B cell (primary cell): ENCODE measurements at regions of chr10 and their contacts with region 1.

Region 1: GRCh38 chr10:12027539-12027938 is 15.1 kb downstream of the UPF2 start:
- DNase-seq: no peak
- ATAC-seq: no peak
- H3K4me3 ChIP-seq: no peak overlapping the region
- H3K4me3 Mint-ChIP-seq: no peak overlapping the region
- H3K27ac ChIP-seq: no peak overlapping the region
- H3K27ac Mint-ChIP-seq: no peak overlapping the region
- H3K4me1 ChIP-seq: peaks cover 4 to 6% of the 10 kb centered on the region in 2 donors
- H3K4me1 Mint-ChIP-seq: peaks cover 14% of the 10 kb centered on the region
- H3K27me3 ChIP-seq: no peaks in the 10 kb centered on the region
- H3K27me3 Mint-ChIP-seq: no peaks in the 10 kb centered on the region
- CTCF ChIP-seq: no peak

Region 2: DNA sequence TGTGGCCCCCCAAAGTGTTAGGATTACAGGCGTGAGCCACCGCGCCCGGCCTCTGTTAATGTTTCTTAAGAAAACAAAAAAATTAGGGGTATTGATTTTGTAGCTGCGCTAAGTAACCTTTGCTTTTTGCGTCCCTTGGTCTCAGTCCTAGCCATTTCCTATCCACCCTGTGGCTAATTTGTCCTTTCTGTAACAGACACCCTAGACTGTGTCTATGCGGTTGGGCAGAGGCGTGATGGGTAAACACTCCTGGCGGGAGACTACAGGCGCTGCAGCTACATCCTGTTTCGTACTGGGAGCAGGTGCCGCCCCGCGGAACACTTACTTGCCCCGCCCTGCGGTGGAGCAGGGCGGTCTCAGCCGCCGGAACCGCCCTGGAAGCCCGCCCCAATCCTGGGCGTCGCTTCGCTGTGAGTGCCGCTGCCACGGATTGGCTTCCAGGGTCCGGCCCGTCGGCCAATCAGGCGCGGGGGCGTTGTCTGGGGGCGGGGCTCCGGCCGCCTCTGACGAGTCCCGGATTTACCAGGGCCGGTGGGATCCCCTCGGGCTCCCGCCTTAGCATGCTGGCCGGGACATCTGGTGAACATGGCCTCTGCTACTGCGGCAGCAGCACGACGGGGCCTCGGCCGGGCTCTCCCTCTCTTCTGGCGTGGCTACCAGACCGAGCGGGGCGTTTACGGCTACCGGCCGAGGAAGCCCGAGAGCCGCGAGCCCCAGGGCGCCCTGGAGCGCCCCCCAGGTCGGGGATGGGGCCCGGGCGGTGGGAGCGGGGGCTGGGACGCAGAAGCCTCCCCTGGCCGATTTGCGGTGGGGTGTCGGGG is 41.1 kb after region 1 on chr10 and contains the start of gene DHTKD1:
- CTCF ChIA-PET with region 1: no interaction called
- POLR2A ChIA-PET with region 1: interaction called, 16 read pairs
- intact Hi-C with region 1: loop called (anchors 5 kb)
- DNase-seq: peak; percentile 98
- ATAC-seq: peak; percentile 98
- H3K4me3 ChIP-seq: peak within 1 kb of the TSS; percentile 92 to 98 (median 96)
- H3K4me3 Mint-ChIP-seq: peak within 1 kb of the TSS; percentile 88
- H3K27ac ChIP-seq: peak within 1 kb of the TSS; percentile 80 to 91
- H3K27ac Mint-ChIP-seq: peak within 1 kb of the TSS; percentile 95
- H3K4me1 ChIP-seq: peaks cover 27 to 33% of the 10 kb centered on the region in 2 donors
- H3K4me1 Mint-ChIP-seq: peaks cover 41% of the 10 kb centered on the region
- H3K27me3 ChIP-seq: no peaks in the 10 kb centered on the region
- H3K27me3 Mint-ChIP-seq: no peaks in the 10 kb centered on the region
- CTCF ChIP-seq: peak; percentile 44
- total RNA-seq, gene DHTKD1: 72.3 and 77.0 TPM in 2 replicates

Region 3: GRCh38 chr10:12720217-12720981 is 692.9 kb after region 1 on chr10:
- CTCF ChIA-PET with region 1: no interaction called
- POLR2A ChIA-PET with region 1: interaction called, 10 read pairs
- intact Hi-C with region 1: no loop called
- DNase-seq: no peak
- ATAC-seq: no peak
- H3K4me3 ChIP-seq: no peak overlapping the region
- H3K4me3 Mint-ChIP-seq: no peak overlapping the region
- H3K27ac ChIP-seq: no peak overlapping the region
- H3K27ac Mint-ChIP-seq: no peak overlapping the region
- H3K4me1 ChIP-seq: no peaks in the 10 kb centered on the region
- H3K4me1 Mint-ChIP-seq: no peaks in the 10 kb centered on the region
- H3K27me3 ChIP-seq: no peaks in the 10 kb centered on the region
- H3K27me3 Mint-ChIP-seq: no peaks in the 10 kb centered on the region
- CTCF ChIP-seq: no peak